ENCODE measurements at regions of chr15 and their contacts with region 1.

Region 1: GRCh38 chr15:75625542-75626347 is at the start of gene SNUPN:
- DNase-seq: peak; percentile 85 to 95 (median 87)
- H3K4me3 ChIP-seq: peak within 1 kb of the TSS; percentile 78
- H3K4me3 Mint-ChIP-seq: peak within 1 kb of the TSS; percentile 89 to 97 (median 90)
- H3K27ac ChIP-seq: peak within 1 kb of the TSS; percentile 85
- H3K27ac Mint-ChIP-seq: peak within 1 kb of the TSS; percentile 96 to 100 (median 98)
- H3K4me1 ChIP-seq: peaks cover 24% of the 10 kb centered on the region
- H3K4me1 Mint-ChIP-seq: peaks cover 19 to 33% (median 28%) of the 10 kb centered on the region in 3 donors
- H3K27me3 ChIP-seq: no peaks in the 10 kb centered on the region
- H3K27me3 Mint-ChIP-seq: no peaks in the 10 kb centered on the region
- total RNA-seq, gene SNUPN: 24.6 to 26.9 TPM

Region 2: DNA sequence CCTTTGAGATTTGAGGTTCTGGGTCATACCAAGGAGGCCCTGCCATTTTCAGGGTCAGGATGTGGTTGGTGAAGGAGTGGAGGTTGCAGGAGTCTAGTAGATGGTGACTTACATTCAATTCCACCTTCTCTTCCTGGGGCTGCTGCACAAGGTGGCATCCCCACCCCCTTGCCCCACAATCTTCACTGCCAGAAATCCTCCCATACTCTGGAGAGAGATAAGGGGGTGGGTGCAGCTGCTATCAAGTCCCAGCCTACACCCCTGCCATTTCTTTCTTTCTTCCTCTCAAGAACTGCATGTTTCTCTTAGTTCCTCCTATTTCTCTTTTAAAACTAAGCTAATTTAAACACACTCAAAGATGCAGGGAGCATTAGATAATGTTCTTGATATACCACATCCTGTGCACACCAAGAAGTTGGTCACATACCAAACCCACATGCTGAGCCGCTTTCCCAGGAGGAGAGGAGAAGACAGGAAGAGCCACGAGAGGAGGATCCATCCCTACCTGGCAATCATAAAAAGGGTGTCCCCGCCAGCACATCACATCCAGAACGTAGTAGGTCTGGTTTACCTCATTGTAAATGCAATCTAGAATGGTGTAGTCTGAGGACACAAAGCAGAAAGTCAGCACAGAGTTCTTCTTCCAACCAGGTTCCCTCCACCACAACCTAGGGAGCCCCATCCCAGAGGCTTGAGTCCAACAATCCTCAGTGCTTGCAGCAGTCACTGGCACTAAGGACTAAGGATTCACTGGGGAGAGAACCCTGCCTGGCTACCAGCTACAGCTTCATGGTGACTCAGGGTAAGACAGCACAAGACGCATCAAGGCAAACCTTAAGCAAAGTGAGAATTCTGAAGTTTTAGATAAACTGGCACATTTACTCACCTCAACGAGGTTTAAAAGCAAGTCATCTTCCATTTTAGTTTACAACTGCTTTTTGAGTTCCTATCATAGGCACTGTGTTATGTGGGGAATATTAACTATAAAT is 18.7 kb before region 1 on chr15:
- CTCF ChIA-PET with region 1: interaction called, 5 read pairs
- POLR2A ChIA-PET with region 1: interaction called, 10 read pairs
- DNase-seq: peak in 4 of 5 donors; percentile 5 to 51 (median 42)
- H3K4me3 ChIP-seq: peak overlapping the region; percentile 45
- H3K4me3 Mint-ChIP-seq: peak overlapping the region; percentile 33 to 88 (median 77)
- H3K27ac ChIP-seq: peak overlapping the region; percentile 45
- H3K27ac Mint-ChIP-seq: peak overlapping the region; percentile 51 to 95 (median 85)
- H3K4me1 ChIP-seq: peaks cover 43% of the 10 kb centered on the region
- H3K4me1 Mint-ChIP-seq: peaks cover 40 to 57% (median 50%) of the 10 kb centered on the region in 3 donors
- H3K27me3 ChIP-seq: no peaks in the 10 kb centered on the region
- H3K27me3 Mint-ChIP-seq: no peaks in the 10 kb centered on the region

Region 3: DNA sequence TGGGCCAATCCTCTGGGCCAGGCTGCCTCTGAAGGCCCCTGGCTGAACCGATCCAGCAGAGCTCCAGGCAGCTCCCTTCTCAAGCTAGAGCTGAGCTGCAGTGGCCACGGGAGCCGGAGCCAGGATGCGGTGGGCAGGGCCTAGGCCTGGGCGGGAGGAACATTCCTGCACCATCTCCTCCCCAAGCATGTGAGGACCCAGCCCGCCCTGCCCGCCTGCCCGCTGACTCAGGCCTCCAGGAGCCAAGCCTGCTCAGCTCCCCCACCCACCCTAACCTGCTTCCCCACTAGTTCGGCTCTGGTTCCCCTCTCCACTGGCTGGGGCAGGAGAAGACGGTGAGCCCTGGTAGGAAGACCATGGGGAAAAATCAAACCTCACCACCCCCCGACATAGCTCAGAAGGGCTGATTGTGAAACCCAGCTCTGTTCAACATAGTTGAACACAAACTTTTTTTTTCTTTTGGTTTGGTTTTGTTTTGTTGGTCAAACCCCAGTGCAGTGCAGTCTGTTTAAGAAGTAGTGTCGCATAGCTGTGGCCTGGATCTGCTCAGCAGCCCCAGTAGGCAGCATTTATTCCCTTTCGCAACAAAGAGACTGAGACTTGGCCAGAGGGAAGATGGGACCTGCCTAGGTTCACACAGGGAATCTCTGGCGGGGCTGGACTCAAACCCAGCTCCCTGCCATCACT is 35.5 kb after region 1 on chr15:
- CTCF ChIA-PET with region 1: no interaction called
- POLR2A ChIA-PET with region 1: no interaction called
- DNase-seq: no peak
- H3K4me3 ChIP-seq: no peak overlapping the region
- H3K4me3 Mint-ChIP-seq: no peak overlapping the region
- H3K27ac ChIP-seq: no peak overlapping the region
- H3K27ac Mint-ChIP-seq: peak overlapping the region in 1 of 8 donors; percentile 48
- H3K4me1 ChIP-seq: no peaks in the 10 kb centered on the region
- H3K4me1 Mint-ChIP-seq: no peaks in the 10 kb centered on the region
- H3K27me3 ChIP-seq: no peaks in the 10 kb centered on the region
- H3K27me3 Mint-ChIP-seq: peaks cover 0 to 2% of the 10 kb centered on the region in 2 donors